Activated CD8-positive, alpha-beta T cell treated with anti-CD3 and anti-CD28 coated beads for 36 hours (primary cell): ENCODE measurements at regions of chr1 and their contacts with region 1.

Region 1: DNA sequence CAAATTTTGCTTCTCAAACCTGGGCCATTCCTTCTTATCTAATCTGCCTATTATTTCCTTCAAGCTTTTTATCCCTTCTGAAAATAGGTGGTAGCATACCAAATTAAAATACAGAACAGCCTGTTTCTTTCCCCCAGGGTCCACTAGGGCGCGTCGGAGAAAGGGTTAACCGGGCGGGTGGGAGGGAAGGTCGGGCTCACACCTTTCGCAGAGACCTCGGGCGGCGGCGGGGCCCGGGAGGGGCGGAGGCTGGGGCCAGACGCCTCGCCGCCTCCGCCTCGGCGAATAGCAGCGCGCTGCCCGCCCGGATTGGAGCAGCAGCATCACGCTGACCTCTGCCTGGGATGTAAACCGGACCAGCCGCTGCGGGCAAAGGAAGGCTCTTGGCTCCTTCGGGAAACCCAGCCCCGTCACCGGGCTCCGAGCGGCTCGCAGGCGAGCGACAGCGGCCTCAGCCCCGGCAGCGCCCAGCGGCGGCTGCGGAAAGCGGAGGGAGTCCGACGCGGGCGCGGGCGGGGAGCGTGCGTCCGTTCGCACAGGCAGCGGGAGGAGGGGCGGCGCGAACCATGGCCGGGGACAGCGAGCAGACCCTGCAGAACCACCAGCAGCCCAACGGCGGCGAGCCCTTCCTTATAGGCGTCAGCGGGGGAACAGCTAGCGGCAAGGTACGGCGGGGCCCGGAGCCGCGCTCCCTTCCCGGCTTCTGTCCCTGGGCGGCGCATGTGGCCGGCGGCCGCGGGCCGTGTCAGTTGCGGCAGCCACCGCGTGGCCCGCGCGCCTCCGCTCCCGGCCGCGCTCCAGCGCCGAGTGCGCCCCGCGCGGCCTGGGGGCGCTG is at the start of gene UCK2:
- DNase-seq: peak; percentile 80
- ATAC-seq: peak; percentile 85
- H3K4me3 Mint-ChIP-seq: peak within 1 kb of the TSS; percentile 99
- H3K27ac Mint-ChIP-seq: peak within 1 kb of the TSS; percentile 97
- H3K4me1 Mint-ChIP-seq: peaks cover 21% of the 10 kb centered on the region
- H3K27me3 Mint-ChIP-seq: no peaks in the 10 kb centered on the region
- CTCF ChIP-seq: no peak
- total RNA-seq, gene UCK2: 66.5 to 72.2 TPM

Region 2: DNA sequence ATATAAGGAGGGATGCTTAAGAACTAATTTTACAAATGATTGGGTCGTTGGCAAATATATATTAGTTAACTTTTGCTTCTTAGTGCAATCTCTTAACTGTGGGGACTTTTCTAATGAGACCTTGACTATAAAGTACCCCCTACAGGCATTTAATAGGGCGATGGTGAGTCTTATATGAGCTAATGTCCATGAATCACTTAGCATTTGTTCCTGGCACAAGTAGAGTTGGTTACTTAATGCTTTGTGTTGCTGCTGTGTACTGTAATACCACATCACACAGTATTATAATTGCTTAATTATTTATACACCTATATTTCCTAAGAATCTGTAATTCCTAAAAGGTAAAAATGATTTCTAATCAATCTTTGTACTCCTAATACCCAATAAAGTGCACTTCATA is 33.5 kb before region 1 on chr1:
- CTCF ChIA-PET with region 1: no interaction called
- POLR2A ChIA-PET with region 1: no interaction called
- intact Hi-C with region 1: no loop called
- DNase-seq: no peak
- ATAC-seq: no peak
- H3K4me3 Mint-ChIP-seq: no peak overlapping the region
- H3K27ac Mint-ChIP-seq: no peak overlapping the region
- H3K4me1 Mint-ChIP-seq: no peaks in the 10 kb centered on the region
- H3K27me3 Mint-ChIP-seq: peaks cover 15% of the 10 kb centered on the region
- CTCF ChIP-seq: no peak

Region 3: DNA sequence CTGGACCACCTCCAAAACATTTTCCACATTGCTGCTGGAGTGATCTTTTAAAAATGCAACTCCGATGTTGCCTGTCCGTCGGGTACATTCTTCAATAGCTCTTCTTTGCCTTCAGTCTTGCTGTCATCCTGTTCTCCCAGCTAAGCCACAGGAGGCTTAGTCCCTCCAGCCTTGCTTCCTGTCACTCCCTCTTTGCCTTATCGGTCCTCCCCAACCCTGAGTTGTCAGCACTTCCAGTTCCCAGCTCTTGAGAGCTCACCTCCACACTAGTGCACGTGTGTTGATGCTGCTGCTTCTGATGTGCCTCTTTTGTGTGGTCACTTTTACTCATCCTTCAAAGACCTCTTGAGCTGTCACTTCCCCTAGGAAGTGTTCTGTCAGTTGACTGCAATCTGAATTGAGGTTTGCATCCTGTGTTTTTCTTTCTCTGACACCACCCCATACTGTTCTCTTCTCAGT is 15.2 kb after region 1 on chr1:
- CTCF ChIA-PET with region 1: interaction called, 7 read pairs
- POLR2A ChIA-PET with region 1: interaction called, 15 read pairs
- intact Hi-C with region 1: no loop called
- DNase-seq: peak; percentile 10
- ATAC-seq: peak; percentile 66
- H3K4me3 Mint-ChIP-seq: no peak overlapping the region
- H3K27ac Mint-ChIP-seq: no peak overlapping the region
- H3K4me1 Mint-ChIP-seq: peaks cover 34% of the 10 kb centered on the region
- H3K27me3 Mint-ChIP-seq: no peaks in the 10 kb centered on the region
- CTCF ChIP-seq: no peak

Region 4: DNA sequence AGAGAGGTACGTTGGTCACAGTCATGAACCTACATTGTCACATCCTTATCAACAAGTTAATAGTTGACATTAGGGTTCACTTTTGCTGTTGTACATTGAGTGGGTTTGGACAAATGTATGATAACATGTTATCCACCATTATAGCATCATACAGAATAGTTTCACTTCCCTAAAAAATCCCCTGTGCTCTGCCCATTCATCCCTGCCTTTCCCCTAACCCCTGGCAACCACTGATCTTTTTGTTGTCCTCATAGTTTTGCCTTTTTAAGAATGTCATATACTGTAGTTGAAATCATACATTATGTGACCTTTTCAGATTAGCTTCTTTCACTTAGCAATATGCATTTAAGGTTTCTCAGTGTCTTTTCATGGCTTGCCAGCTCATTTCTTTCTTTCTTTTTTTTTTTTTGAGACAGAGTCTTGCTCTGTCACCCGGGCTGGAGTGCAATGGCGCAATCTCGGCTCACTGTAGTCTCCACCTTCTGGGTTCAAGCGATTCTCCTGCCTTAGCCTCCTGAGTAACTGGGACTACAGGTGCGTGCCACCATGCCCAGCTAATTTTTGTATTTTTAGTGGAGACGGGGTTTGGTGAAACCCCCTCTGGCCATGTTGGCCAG is 50.6 kb after region 1 on chr1:
- CTCF ChIA-PET with region 1: no interaction called
- POLR2A ChIA-PET with region 1: interaction called, 3 read pairs
- intact Hi-C with region 1: loop called (anchors 5 kb)
- DNase-seq: no peak
- ATAC-seq: peak; percentile 51
- H3K4me3 Mint-ChIP-seq: no peak overlapping the region
- H3K27ac Mint-ChIP-seq: no peak overlapping the region
- H3K4me1 Mint-ChIP-seq: peaks cover 43% of the 10 kb centered on the region
- H3K27me3 Mint-ChIP-seq: peaks cover 5% of the 10 kb centered on the region
- CTCF ChIP-seq: no peak